ENCODE measurements at regions of chr1 and their contacts with region 1.

Region 1: DNA sequence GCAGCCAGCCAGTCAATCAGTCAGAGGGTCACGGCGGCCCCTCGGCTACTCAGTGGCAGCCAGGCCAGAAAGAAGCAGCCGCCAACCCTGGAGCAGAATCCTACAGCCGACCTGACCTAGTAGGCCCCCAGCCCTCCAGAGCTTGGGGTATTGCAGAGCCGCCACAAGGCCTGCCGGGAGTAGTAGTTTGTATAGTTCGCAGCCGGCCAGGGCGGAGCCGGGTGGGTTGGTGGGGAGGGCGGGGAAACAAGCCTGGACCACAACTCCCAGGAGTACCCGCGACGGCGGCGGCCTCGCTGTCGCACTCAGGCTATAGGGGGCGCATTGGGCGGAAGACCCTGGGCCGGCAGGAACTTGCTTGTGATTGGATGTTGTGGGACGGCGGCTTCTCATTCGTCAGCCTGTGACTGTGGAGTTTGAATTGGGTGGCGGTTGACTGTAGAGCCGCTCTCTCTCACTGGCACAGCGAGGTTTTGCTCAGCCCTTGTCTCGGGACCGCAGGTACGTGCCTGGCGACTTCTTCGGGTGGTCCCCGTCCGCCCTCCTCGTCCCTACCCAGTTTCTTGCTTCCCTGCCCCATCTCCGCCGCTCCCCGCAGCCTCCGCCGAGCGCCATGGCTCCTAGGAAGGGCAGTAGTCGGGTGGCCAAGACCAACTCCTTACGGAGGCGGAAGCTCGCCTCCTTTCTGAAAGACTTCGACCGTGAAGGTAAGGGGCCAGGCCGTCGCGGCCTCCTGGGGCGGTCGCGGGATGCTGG is at the start of gene CDCA8:
- DNase-seq: peak; percentile 99
- H3K4me3 Mint-ChIP-seq: peak within 1 kb of the TSS; percentile 92
- H3K27ac Mint-ChIP-seq: peak within 1 kb of the TSS; percentile 91
- H3K4me1 Mint-ChIP-seq: peaks cover 50% of the 10 kb centered on the region
- H3K27me3 Mint-ChIP-seq: no peaks in the 10 kb centered on the region
- total RNA-seq, gene CDCA8: 33.5 and 37.2 TPM in 2 replicates

Region 2: DNA sequence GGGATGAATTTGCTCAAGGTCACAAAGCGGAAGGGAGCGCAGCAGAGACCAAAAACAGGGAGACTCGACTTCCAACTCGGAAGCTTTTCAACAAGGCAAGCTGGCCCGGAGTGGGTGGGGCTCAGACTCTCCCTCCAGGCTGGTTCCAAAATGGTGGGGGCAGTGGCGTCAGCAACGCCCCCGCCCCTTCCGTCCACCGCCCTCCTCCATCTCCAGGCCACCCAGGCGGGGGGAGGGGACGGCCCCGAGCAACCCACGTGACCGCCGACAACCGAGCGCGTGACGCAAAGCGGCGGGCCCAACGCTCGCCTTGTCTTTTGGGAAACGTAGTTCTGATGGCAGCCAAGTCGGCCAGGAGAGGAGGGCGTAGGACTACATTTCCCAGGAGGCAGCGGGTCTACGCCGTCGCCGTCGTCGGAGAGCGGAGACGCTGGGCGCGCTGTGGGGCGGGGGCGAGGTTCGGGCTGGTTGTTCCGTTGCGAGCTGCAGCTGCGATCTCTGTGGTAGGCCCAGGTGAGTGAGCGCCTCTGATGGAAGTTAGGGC is 1468.2 kb before region 1 on chr1 and contains the start of gene THRAP3:
- intact Hi-C with region 1: loop called (anchors 5 kb)
- DNase-seq: peak; percentile 100
- H3K4me3 Mint-ChIP-seq: peak within 1 kb of the TSS; percentile 95
- H3K27ac Mint-ChIP-seq: peak within 1 kb of the TSS; percentile 100
- H3K4me1 Mint-ChIP-seq: peaks cover 36% of the 10 kb centered on the region
- H3K27me3 Mint-ChIP-seq: peaks cover 2% of the 10 kb centered on the region
- total RNA-seq, gene THRAP3: 147 and 154 TPM in 2 replicates

Region 3: DNA sequence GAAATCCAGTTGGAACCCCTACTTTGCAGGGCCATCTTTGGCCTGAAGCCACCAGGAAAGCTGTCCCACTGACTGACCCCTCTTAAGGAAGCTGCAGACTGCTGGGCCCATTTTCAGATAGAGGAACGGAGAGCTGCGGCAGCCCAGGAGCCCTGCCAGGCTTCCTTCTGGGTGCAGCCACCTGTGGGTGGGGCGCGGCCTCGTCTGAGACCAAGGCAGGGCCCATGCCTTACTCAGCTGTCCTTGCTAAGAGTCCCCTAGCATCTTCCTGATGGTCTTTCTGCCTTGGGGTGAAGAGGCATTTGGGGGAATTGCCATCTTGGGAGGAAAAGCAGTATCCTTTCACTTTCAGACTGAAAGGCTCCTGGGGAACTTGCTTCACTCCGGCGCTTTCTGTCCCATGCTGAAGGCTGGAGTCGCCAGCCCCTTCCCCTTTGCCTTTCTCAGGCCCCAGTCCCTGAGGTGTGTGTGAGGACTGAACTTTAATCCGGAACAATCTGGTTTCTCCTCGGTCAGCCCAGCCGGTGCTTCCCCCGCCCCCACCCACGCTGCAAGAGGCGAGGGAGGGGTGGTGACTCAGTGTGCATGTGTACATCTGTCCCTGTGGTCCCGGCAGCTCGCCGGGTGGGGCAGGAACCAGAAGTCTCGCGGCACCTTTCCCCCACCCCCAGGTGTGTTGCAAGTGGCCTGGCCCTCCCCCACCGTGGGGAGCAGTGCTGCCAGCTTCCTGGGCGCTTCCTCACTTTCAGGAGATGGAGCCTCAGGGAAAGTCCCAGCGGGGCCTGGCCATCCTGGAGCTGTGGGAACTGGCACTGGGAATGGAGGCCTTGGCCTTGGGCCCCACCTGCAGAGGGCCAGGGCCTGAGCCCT is 212.8 kb before region 1 on chr1:
- intact Hi-C with region 1: loop called (anchors 1 kb)
- DNase-seq: peak; percentile 84
- H3K4me3 Mint-ChIP-seq: peak overlapping the region; percentile 100
- H3K27ac Mint-ChIP-seq: peak overlapping the region; percentile 97
- H3K4me1 Mint-ChIP-seq: peaks cover 42% of the 10 kb centered on the region
- H3K27me3 Mint-ChIP-seq: peaks cover 2% of the 10 kb centered on the region

Region 4: GRCh38 chr1:37595440-37596319 is 96.6 kb before region 1 on chr1 and contains the start of gene GNL2:
- intact Hi-C with region 1: loop called (anchors 1 kb)
- DNase-seq: peak; percentile 97
- H3K4me3 Mint-ChIP-seq: peak within 1 kb of the TSS; percentile 96
- H3K27ac Mint-ChIP-seq: peak within 1 kb of the TSS; percentile 90
- H3K4me1 Mint-ChIP-seq: peaks cover 20% of the 10 kb centered on the region
- H3K27me3 Mint-ChIP-seq: peaks cover 4% of the 10 kb centered on the region
- total RNA-seq, gene GNL2: 108 and 113 TPM in 2 replicates

Region 5: DNA sequence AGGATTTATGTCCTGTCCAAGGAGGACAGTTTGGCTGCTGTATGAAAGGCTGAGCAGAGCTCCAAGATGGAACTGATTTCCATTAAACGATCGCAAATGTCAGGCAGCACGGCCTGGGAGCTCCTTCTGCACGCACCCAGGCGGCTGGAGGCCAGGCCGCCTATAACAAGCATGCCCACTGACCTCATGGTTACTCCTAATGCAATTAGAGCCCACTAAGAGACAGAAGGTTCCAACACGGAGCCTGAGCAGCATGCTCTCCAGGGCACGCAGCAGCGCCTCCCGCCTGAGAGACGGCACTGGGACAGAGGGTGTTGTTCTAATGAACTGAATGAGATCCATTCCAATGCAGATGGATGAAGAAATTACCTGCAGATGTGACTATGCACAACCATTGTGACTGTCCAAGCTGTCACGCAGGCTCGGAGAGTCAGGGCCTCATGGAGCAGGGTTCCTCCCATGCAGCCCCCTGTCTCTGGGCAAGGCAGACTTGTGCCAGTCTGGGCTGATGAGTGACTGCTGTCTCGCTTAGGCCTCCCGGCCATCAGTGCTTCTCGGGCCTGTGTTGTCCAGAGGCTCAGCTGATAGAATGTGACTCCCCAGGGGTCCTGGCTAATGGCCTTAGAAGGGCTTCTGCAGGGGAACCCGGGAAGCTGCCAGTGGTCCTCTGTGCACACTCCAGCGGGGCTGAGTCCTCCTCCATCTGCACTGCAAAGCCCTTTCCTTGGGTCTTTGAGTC is 25.1 kb before region 1 on chr1:
- intact Hi-C with region 1: no loop called
- DNase-seq: no peak
- H3K4me3 Mint-ChIP-seq: no peak overlapping the region
- H3K27ac Mint-ChIP-seq: no peak overlapping the region
- H3K4me1 Mint-ChIP-seq: no peaks in the 10 kb centered on the region
- H3K27me3 Mint-ChIP-seq: peaks cover 13% of the 10 kb centered on the region

Region 6: DNA sequence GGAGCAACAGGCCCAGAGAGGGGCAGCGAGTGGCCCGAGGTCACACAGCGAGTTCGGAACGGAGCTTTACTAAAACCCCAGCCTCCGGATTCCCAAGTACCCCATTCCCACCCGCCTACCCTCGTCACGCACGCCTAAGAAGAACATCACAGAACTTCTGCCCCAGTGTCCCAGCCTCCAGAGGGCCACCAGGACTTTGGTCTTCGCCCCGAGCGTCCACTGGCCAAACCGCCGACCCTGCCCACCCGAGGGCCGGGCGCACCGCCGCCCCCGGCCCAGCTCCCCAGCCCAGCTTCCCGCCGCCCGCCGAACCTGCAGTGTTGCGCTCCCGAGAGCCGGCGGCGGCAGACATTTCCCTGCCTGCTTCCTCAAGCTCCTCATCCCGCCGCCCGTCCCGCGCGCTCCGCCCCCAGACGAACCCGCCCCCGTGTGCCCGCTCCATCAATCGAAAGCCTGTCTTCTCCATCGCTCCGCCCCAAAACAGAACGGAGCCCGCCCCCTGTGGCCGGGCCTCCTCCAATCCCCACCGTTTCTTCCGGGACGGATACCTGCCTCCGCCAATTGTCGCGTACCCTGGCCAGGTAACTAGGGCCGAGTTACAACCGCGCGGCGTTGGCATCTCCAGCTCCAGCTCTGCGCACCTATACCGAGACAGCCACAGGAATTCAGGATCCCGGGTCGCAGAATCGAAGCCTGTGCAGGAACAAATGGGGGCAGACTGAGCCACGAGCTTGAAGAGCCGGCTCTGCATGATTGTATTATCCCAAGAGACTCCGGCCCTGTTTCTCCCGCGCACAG is 239.3 kb after region 1 on chr1:
- intact Hi-C with region 1: loop called (anchors 1 kb)
- DNase-seq: peak; percentile 96
- H3K4me3 Mint-ChIP-seq: peak overlapping the region; percentile 95
- H3K27ac Mint-ChIP-seq: peak overlapping the region; percentile 81
- H3K4me1 Mint-ChIP-seq: peaks cover 28% of the 10 kb centered on the region
- H3K27me3 Mint-ChIP-seq: no peaks in the 10 kb centered on the region

Region 7: GRCh38 chr1:38873027-38873969 is 1181.0 kb after region 1 on chr1 and contains the start of gene MYCBP:
- intact Hi-C with region 1: loop called (anchors 1 kb)
- DNase-seq: peak; percentile 98
- H3K4me3 Mint-ChIP-seq: peak within 1 kb of the TSS; percentile 87
- H3K27ac Mint-ChIP-seq: peak within 1 kb of the TSS; percentile 79
- H3K4me1 Mint-ChIP-seq: peaks cover 23% of the 10 kb centered on the region
- H3K27me3 Mint-ChIP-seq: no peaks in the 10 kb centered on the region
- total RNA-seq, gene MYCBP: 38.4 and 39.7 TPM in 2 replicates

Measured in activated T-helper 1 cell treated with anti-CD3 and anti-CD28 coated beads, Interleukin-12 subunit alpha, Interleukin-12 subunit beta, Interleukin-2, Interleukin-4 antibody, amounts not matched to agents 30 ng/mL and 10 ng/mL and 1 ng/mL, durations not matched to agents 14 hours and 24 hours and 36 hours (primary cell).